ENCODE measurements at regions of chr5 and their contacts with region 1.

Region 1: GRCh38 chr5:37412515-37413277 is 33.6 kb downstream of the WDR70 start:
- DNase-seq: peak; percentile 85
- ATAC-seq: peak; percentile 88
- H3K4me3 ChIP-seq: no peak overlapping the region
- H3K27ac ChIP-seq: no peak overlapping the region
- H3K4me1 ChIP-seq: no peaks in the 10 kb centered on the region
- H3K27me3 ChIP-seq: no peaks in the 10 kb centered on the region
- CTCF ChIP-seq: peak; percentile 100
- POLR2A ChIP-seq: no peak
- RAD21 ChIP-seq: peak; percentile 95

Region 2: GRCh38 chr5:37685213-37685612 is 272.5 kb after region 1 on chr5:
- CTCF ChIA-PET with region 1: no interaction called
- POLR2A ChIA-PET with region 1: no interaction called
- dilution Hi-C with region 1: no loop called
- in situ Hi-C with region 1: no loop called
- intact Hi-C with region 1: no loop called
- DNase-seq: no peak
- ATAC-seq: no peak
- H3K4me3 ChIP-seq: no peak overlapping the region
- H3K27ac ChIP-seq: no peak overlapping the region
- H3K4me1 ChIP-seq: no peaks in the 10 kb centered on the region
- H3K27me3 ChIP-seq: no peaks in the 10 kb centered on the region
- CTCF ChIP-seq: no peak
- POLR2A ChIP-seq: no peak
- RAD21 ChIP-seq: no peak

Region 3: GRCh38 chr5:37757980-37758583 is 345.4 kb after region 1 on chr5:
- CTCF ChIA-PET with region 1: no interaction called
- POLR2A ChIA-PET with region 1: no interaction called
- dilution Hi-C with region 1: no loop called
- in situ Hi-C with region 1: no loop called
- intact Hi-C with region 1: loop called (anchors 5 kb)
- DNase-seq: no peak
- ATAC-seq: no peak
- H3K4me3 ChIP-seq: no peak overlapping the region
- H3K27ac ChIP-seq: no peak overlapping the region
- H3K4me1 ChIP-seq: no peaks in the 10 kb centered on the region
- H3K27me3 ChIP-seq: no peaks in the 10 kb centered on the region
- CTCF ChIP-seq: peak; percentile 39
- POLR2A ChIP-seq: no peak
- RAD21 ChIP-seq: peak; percentile 47

Region 4: GRCh38 chr5:37825334-37825915 is 412.7 kb after region 1 on chr5:
- CTCF ChIA-PET with region 1: interaction called, 7 read pairs
- POLR2A ChIA-PET with region 1: no interaction called
- dilution Hi-C with region 1: no loop called
- in situ Hi-C with region 1: loop called (anchors 10 kb)
- intact Hi-C with region 1: no loop called
- DNase-seq: no peak
- ATAC-seq: no peak
- H3K4me3 ChIP-seq: no peak overlapping the region
- H3K27ac ChIP-seq: no peak overlapping the region
- H3K4me1 ChIP-seq: no peaks in the 10 kb centered on the region
- H3K27me3 ChIP-seq: no peaks in the 10 kb centered on the region
- CTCF ChIP-seq: no peak
- POLR2A ChIP-seq: no peak
- RAD21 ChIP-seq: no peak

Region 5: GRCh38 chr5:37831821-37832534 is 419.3 kb after region 1 on chr5:
- CTCF ChIA-PET with region 1: interaction called, 7 read pairs
- POLR2A ChIA-PET with region 1: no interaction called
- dilution Hi-C with region 1: no loop called
- in situ Hi-C with region 1: loop called (anchors 10 kb)
- intact Hi-C with region 1: loop called (anchors 1 kb)
- DNase-seq: peak; percentile 84
- ATAC-seq: peak; percentile 81
- H3K4me3 ChIP-seq: no peak overlapping the region
- H3K27ac ChIP-seq: no peak overlapping the region
- H3K4me1 ChIP-seq: peaks cover 6% of the 10 kb centered on the region; the same call in 1 of the 2 replicates
- H3K27me3 ChIP-seq: peaks cover 4% of the 10 kb centered on the region; the same call in 1 of the 2 replicates
- CTCF ChIP-seq: peak; percentile 16; the same call in 1 of the 2 replicates
- POLR2A ChIP-seq: no peak
- RAD21 ChIP-seq: peak; percentile 27

Region 6: DNA sequence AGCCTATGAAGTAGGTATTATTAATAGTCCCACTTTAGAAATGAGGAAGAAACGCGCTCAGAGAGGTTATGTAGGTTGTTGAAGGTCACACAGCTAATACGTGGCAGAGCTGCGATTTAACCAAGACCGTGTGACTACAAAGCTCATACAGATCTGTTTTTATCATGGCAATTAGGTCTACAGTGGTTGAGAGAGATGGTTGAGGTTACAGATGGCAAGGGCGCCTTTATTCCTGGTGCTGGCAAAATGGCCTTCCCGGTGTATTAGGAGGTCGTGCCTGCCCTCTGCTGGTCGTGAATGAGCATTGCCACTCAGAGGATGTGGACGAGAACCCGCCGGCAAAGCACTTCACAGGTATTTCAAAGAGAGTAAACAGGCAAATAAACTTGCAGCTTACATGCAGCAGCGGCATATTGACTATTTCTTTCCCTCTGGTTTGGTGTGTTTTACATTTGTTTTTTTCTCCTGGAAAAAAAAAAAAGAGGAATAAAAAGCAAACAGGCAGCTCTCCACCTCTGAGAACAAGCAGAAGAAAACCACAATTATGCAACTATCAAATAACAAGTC is 780.4 kb after region 1 on chr5:
- CTCF ChIA-PET with region 1: interaction called, 9 read pairs
- POLR2A ChIA-PET with region 1: no interaction called
- dilution Hi-C with region 1: loop called (anchors 25 kb)
- in situ Hi-C with region 1: loop called (anchors 5 kb)
- intact Hi-C with region 1: loop called (anchors 1 kb)
- DNase-seq: peak; percentile 53
- ATAC-seq: peak; percentile 97
- H3K4me3 ChIP-seq: no peak overlapping the region
- H3K27ac ChIP-seq: no peak overlapping the region
- H3K4me1 ChIP-seq: no peaks in the 10 kb centered on the region
- H3K27me3 ChIP-seq: peaks cover 51% of the 10 kb centered on the region
- CTCF ChIP-seq: peak; percentile 93
- POLR2A ChIP-seq: 0 out of 2 replicates have a peak, but pooled peaks have one; percentile 26
- RAD21 ChIP-seq: peak; percentile 98